Naive thymus-derived CD4-positive, alpha-beta T cell (primary cell): ENCODE measurements at regions of chr1 and their contacts with region 1.

Region 1: GRCh38 chr1:166975361-166976129 is at the start of gene ILDR2:
- DNase-seq: peak; percentile 25 to 72 (median 44)
- ATAC-seq: peak; percentile 88
- H3K4me3 ChIP-seq: peak within 1 kb of the TSS; percentile 71
- H3K4me3 Mint-ChIP-seq: peak within 1 kb of the TSS; percentile 73 to 98 (median 88)
- H3K27ac ChIP-seq: peak within 1 kb of the TSS; percentile 54
- H3K27ac Mint-ChIP-seq: peak within 1 kb of the TSS; percentile 30 to 84 (median 51)
- H3K4me1 ChIP-seq: peaks cover 4 to 9% of the 10 kb centered on the region in 2 donors
- H3K4me1 Mint-ChIP-seq: peaks cover 19 to 46% (median 24%) of the 10 kb centered on the region in 7 donors
- H3K27me3 ChIP-seq: peaks cover 0 to 5% of the 10 kb centered on the region in 2 donors
- H3K27me3 Mint-ChIP-seq: peaks cover 13 to 31% (median 24%) of the 10 kb centered on the region in 5 donors
- total RNA-seq, gene ILDR2: 0.15 to 10.0 (median 0.29) TPM

Region 2: GRCh38 chr1:166875734-166876539 is 99.6 kb before region 1 on chr1 and contains the start of gene TADA1:
- CTCF ChIA-PET with region 1: no interaction called
- POLR2A ChIA-PET with region 1: interaction called, 4 read pairs
- intact Hi-C with region 1: loop called (anchors 1 to 5 kb)
- DNase-seq: peak; percentile 87 to 97 (median 96)
- ATAC-seq: peak; percentile 95
- H3K4me3 ChIP-seq: peak within 1 kb of the TSS; percentile 64
- H3K4me3 Mint-ChIP-seq: peak within 1 kb of the TSS; percentile 93 to 100 (median 96)
- H3K27ac ChIP-seq: peak within 1 kb of the TSS; percentile 83
- H3K27ac Mint-ChIP-seq: peak within 1 kb of the TSS; percentile 75 to 99 (median 98)
- H3K4me1 ChIP-seq: peaks cover 10 to 12% of the 10 kb centered on the region in 2 donors
- H3K4me1 Mint-ChIP-seq: peaks cover 43 to 63% (median 55%) of the 10 kb centered on the region in 7 donors
- H3K27me3 ChIP-seq: no peaks in the 10 kb centered on the region
- H3K27me3 Mint-ChIP-seq: peaks cover 0 to 11% (median 0%) of the 10 kb centered on the region in 5 donors
- total RNA-seq, gene TADA1: 9.4 to 16.2 (median 15.6) TPM

Region 3: GRCh38 chr1:166925810-166926478 is 49.6 kb before region 1 on chr1:
- CTCF ChIA-PET with region 1: no interaction called
- POLR2A ChIA-PET with region 1: no interaction called
- intact Hi-C with region 1: no loop called
- DNase-seq: no peak
- ATAC-seq: no peak
- H3K4me3 ChIP-seq: no peak overlapping the region
- H3K4me3 Mint-ChIP-seq: no peak overlapping the region
- H3K27ac ChIP-seq: no peak overlapping the region
- H3K27ac Mint-ChIP-seq: no peak overlapping the region
- H3K4me1 ChIP-seq: no peaks in the 10 kb centered on the region
- H3K4me1 Mint-ChIP-seq: no peaks in the 10 kb centered on the region
- H3K27me3 ChIP-seq: peaks cover 0 to 6% of the 10 kb centered on the region in 2 donors
- H3K27me3 Mint-ChIP-seq: peaks cover 15 to 25% (median 18%) of the 10 kb centered on the region in 5 donors

Region 4: GRCh38 chr1:167043752-167044488 is 68.4 kb after region 1 on chr1:
- CTCF ChIA-PET with region 1: no interaction called
- POLR2A ChIA-PET with region 1: no interaction called
- intact Hi-C with region 1: loop called in 1 of 2 experiments (anchors 5 kb)
- DNase-seq: peak; percentile 33 to 74 (median 68)
- ATAC-seq: peak; percentile 93
- H3K4me3 ChIP-seq: peak overlapping the region; percentile 68
- H3K4me3 Mint-ChIP-seq: peak overlapping the region; percentile 81 to 93 (median 90)
- H3K27ac ChIP-seq: no peak overlapping the region
- H3K27ac Mint-ChIP-seq: peak overlapping the region; percentile 53 to 89 (median 85)
- H3K4me1 ChIP-seq: peaks cover 0 to 17% of the 10 kb centered on the region in 2 donors
- H3K4me1 Mint-ChIP-seq: peaks cover 14 to 22% (median 19%) of the 10 kb centered on the region in 7 donors
- H3K27me3 ChIP-seq: no peaks in the 10 kb centered on the region
- H3K27me3 Mint-ChIP-seq: peaks cover 0 to 44% (median 0%) of the 10 kb centered on the region in 5 donors

Region 5: GRCh38 chr1:167059045-167059808 is 83.7 kb after region 1 on chr1:
- CTCF ChIA-PET with region 1: interaction called, 5 read pairs
- POLR2A ChIA-PET with region 1: no interaction called
- intact Hi-C with region 1: loop called (anchors 2 kb)
- DNase-seq: peak; percentile 38 to 75 (median 57)
- ATAC-seq: peak; percentile 78
- H3K4me3 ChIP-seq: no peak overlapping the region
- H3K4me3 Mint-ChIP-seq: no peak overlapping the region
- H3K27ac ChIP-seq: no peak overlapping the region
- H3K27ac Mint-ChIP-seq: peak overlapping the region in 6 of 9 donors; percentile 5 to 55 (median 25)
- H3K4me1 ChIP-seq: peaks cover 0 to 4% of the 10 kb centered on the region in 2 donors
- H3K4me1 Mint-ChIP-seq: peaks cover 0 to 8% (median 6%) of the 10 kb centered on the region in 7 donors
- H3K27me3 ChIP-seq: no peaks in the 10 kb centered on the region
- H3K27me3 Mint-ChIP-seq: no peaks in the 10 kb centered on the region

Region 6: GRCh38 chr1:167130829-167131510 is 155.4 kb after region 1 on chr1:
- CTCF ChIA-PET with region 1: no interaction called
- POLR2A ChIA-PET with region 1: no interaction called
- intact Hi-C with region 1: no loop called
- DNase-seq: no peak
- ATAC-seq: no peak
- H3K4me3 ChIP-seq: no peak overlapping the region
- H3K4me3 Mint-ChIP-seq: no peak overlapping the region
- H3K27ac ChIP-seq: no peak overlapping the region
- H3K27ac Mint-ChIP-seq: no peak overlapping the region
- H3K4me1 ChIP-seq: no peaks in the 10 kb centered on the region
- H3K4me1 Mint-ChIP-seq: peaks cover 0 to 4% (median 0%) of the 10 kb centered on the region in 7 donors
- H3K27me3 ChIP-seq: no peaks in the 10 kb centered on the region
- H3K27me3 Mint-ChIP-seq: peaks cover 12 to 55% (median 26%) of the 10 kb centered on the region in 5 donors

Region 7: DNA sequence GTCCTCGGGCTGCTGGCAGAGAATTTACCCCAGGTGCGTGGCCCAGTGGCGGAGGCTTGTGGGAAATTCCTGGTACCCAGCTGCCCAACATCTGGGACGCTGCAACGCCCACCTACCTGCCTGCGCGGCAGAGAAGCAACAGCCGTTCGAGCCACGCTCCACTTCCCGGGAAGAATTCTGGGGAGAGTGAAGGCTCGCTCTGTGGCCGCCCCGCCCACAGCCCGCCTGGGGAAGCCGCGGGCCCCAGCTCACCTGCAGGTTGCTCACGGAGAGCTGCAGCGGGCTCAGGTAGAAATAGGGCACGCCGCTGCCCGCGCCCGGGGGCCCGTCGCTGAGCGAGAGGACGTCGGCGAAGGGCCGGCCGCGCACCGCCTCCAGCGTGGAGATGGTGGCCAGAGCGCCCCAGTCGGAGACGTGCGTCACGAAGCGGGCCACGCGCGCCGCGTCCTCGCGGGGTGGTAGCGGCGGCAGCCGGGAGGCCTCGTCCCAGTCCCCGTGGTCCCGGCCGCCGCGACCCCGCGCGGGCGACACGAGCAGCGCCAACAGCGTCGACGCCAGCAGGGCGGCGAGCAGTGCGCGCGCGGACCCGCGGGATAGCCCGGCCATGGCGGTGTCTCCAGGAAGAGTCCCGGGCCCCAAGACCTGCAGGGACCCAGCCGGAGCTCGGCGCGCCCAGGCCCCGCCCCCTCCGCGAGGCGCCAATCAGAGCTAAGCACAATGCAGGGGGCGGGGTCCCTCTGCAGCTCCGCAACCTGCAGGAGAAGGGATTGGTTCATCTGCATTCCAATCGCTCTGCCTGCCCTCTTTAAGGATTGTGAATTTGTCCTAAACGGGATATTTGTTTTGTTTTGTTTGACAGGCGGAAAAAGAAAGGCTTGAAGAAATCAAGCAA is 577.8 kb after region 1 on chr1 and contains the start of gene CREG1:
- CTCF ChIA-PET with region 1: no interaction called
- POLR2A ChIA-PET with region 1: no interaction called
- intact Hi-C with region 1: loop called in 1 of 2 experiments (anchors 10 kb)
- DNase-seq: peak; percentile 82 to 92 (median 88)
- ATAC-seq: peak; percentile 98
- H3K4me3 ChIP-seq: peak within 1 kb of the TSS; percentile 71
- H3K4me3 Mint-ChIP-seq: peak within 1 kb of the TSS; percentile 85 to 97 (median 92)
- H3K27ac ChIP-seq: peak within 1 kb of the TSS; percentile 72
- H3K27ac Mint-ChIP-seq: peak within 1 kb of the TSS; percentile 43 to 88 (median 80)
- H3K4me1 ChIP-seq: peaks cover 19% of the 10 kb centered on the region in 2 donors
- H3K4me1 Mint-ChIP-seq: peaks cover 35 to 58% (median 46%) of the 10 kb centered on the region in 7 donors
- H3K27me3 ChIP-seq: no peaks in the 10 kb centered on the region
- H3K27me3 Mint-ChIP-seq: peaks cover 0 to 4% (median 0%) of the 10 kb centered on the region in 5 donors
- total RNA-seq, gene CREG1: 10.6 to 33.4 (median 23.1) TPM